PC-3 (cell line): ENCODE measurements at regions of chr14 and their contacts with region 1.

Region 1: GRCh38 chr14:27228053-27228452 is 630.2 kb upstream of the NOVA1 start:
- DNase-seq: peak; percentile 43
- ATAC-seq: peak; percentile 99
- H3K4me3 ChIP-seq: no peak overlapping the region
- H3K27ac ChIP-seq: no peak overlapping the region
- H3K4me1 ChIP-seq: 0 out of 2 replicates have a peak, but pooled peaks cover 4% of the 10 kb centered on the region
- H3K27me3 ChIP-seq: no peaks in the 10 kb centered on the region
- CTCF ChIP-seq: no peak

Region 2: DNA sequence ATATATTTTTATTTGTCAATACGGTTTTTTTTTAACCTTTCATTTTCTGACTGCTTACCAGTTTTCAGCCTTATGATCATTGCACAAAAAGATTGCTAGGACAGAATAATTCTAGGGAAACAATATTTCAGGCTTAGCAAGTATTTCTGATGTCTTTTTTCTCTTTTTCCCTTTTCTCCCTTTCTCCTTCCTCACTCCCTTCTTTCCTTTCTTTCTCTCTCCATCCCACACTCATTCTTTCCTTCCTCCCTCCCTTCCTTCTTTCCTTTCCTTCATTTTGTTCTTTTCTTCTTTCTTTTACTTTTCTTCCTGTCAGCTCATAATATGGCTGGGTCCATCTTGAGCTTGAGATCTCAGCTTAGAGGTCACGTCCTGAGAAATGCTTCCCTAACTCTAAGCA is 28.8 kb before region 1 on chr14:
- CTCF ChIA-PET with region 1: no interaction called
- POLR2A ChIA-PET with region 1: no interaction called
- intact Hi-C with region 1: no loop called
- DNase-seq: no peak
- ATAC-seq: no peak
- H3K4me3 ChIP-seq: no peak overlapping the region
- H3K27ac ChIP-seq: no peak overlapping the region
- H3K4me1 ChIP-seq: no peaks in the 10 kb centered on the region
- H3K27me3 ChIP-seq: no peaks in the 10 kb centered on the region
- CTCF ChIP-seq: no peak

Region 3: DNA sequence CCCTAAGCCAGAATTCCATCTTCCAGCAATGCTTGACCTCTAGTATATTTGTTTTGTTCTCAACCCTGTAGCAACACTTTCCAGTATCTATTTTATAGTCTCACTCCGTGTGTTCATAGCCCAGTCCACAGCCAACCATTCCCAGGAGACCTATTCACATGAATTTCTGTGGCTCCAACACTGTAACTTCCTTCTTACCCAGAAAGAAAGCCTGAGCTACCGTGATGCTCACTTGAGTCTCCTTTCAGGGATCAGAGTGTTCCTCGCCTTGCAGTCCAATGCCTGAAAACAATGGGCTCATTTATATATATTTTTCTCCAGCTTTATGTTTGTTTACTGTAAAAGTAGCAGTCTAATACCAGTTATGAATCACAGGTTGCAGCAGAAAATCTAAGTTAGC is 14.8 kb after region 1 on chr14:
- CTCF ChIA-PET with region 1: no interaction called
- POLR2A ChIA-PET with region 1: no interaction called
- intact Hi-C with region 1: loop called (anchors 1 kb)
- DNase-seq: peak; percentile 49
- ATAC-seq: peak; percentile 78
- H3K4me3 ChIP-seq: peak overlapping the region; percentile 26
- H3K27ac ChIP-seq: peak overlapping the region; percentile 83
- H3K4me1 ChIP-seq: peaks cover 24% of the 10 kb centered on the region
- H3K27me3 ChIP-seq: no peaks in the 10 kb centered on the region
- CTCF ChIP-seq: no peak